GM10248 (cell line): ENCODE measurements at regions of chr3 and their contacts with region 1.

Region 1: DNA sequence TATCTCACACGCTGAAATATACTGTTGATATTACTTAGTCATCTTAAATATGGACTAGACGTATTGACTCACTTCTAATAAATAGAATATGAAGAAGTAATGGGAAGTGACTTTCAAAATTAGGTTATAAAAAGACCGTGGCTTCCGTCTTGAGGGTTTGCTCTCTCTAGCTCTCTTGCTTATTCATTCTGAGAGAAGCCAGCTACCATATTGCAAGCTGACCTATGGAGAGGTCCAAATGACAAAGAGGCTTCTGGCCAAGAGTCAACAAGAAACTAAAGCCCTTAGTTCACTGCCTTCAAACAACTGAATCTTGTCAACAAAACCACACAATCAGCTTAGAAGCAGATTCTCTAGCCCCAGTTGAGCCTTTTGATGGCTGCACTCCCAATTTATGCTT is 46.1 kb downstream of the SLC9C1 start:
- DNase-seq: peak; percentile 13
- CTCF ChIP-seq: no peak

Region 2: GRCh38 chr3:112101916-112102315 is 146.0 kb before region 1 on chr3:
- CTCF ChIA-PET with region 1: no interaction called
- POLR2A ChIA-PET with region 1: no interaction called
- DNase-seq: no peak
- CTCF ChIP-seq: no peak

Region 3: GRCh38 chr3:112231727-112232126 is 16.2 kb before region 1 on chr3:
- CTCF ChIA-PET with region 1: interaction called, 16 read pairs
- POLR2A ChIA-PET with region 1: no interaction called
- DNase-seq: no peak
- CTCF ChIP-seq: no peak

Region 4: GRCh38 chr3:112261742-112262141 is 13.8 kb after region 1 on chr3:
- CTCF ChIA-PET with region 1: interaction called, 13 read pairs
- POLR2A ChIA-PET with region 1: no interaction called
- DNase-seq: no peak
- CTCF ChIP-seq: no peak